Heart left ventricle (tissue), 16 donors: ENCODE measurements at regions of chr6 and their contacts with region 1.

Region 1: GRCh38 chr6:108896111-108896661 is 48.0 kb downstream of the ARMC2 start:
- DNase-seq: no peak
- ATAC-seq: peak in 3 of 4 donors; percentile 29 to 45 (median 31)
- H3K4me3 ChIP-seq: no peak overlapping the region
- H3K27ac ChIP-seq: peak overlapping the region; percentile 40 to 90 (median 66)
- H3K4me1 ChIP-seq: peaks cover 0 to 58% (median 26%) of the 10 kb centered on the region in 12 donors
- H3K27me3 ChIP-seq: no peaks in the 10 kb centered on the region
- CTCF ChIP-seq: no peak
- POLR2A ChIP-seq: no peak

Region 2: DNA sequence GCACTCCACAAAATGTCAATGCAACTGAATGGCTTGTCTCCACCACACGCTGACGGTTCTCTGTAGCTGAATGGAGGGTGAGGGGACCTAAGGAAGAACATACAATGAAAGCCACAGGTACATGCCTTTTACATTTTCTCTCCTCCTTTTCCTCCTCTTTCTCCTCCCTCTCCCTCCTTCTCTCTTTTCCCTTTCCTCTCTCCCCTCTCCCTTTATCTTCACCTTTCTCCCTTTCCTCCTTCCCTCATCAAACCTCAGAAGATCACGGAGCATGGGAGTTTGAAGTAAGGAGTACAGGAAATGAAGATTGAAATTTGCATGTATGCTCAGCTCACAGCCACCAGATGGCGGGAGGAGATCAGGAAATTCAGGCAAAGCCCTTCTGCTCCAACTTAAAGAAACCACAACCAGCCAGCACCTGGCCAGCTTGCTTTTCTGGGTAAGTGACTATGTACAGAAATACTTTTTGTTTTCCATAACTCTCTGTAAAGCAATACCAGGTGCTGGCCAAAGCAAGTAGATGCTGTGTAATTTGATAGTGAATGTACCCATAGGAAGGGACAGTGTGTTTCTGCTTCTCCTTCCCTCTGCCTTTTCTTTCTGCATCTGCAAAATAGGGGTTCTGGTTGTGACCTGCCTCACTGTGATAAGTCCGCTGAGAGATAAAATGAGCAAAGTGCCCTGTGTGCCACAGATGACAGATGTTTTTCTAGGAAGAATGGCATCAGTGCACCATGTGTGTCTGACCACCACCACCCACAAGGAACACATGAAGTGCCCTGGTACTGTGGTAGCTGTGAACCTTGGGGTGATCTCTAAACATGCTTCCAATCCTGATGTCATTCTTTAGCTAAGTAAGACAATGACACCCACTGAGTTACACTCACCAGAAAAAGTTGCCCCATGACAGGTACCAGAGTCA is 354.1 kb before region 1 on chr6:
- intact Hi-C with region 1: loop called (anchors 1 to 5 kb)
- DNase-seq: peak; percentile 61 to 76 (median 70)
- ATAC-seq: peak; percentile 54 to 86 (median 80)
- H3K4me3 ChIP-seq: no peak overlapping the region
- H3K27ac ChIP-seq: no peak overlapping the region
- H3K4me1 ChIP-seq: peaks cover 0 to 14% (median 0%) of the 10 kb centered on the region in 12 donors
- H3K27me3 ChIP-seq: no peaks in the 10 kb centered on the region
- CTCF ChIP-seq: peak; percentile 68 to 92 (median 89)
- POLR2A ChIP-seq: no peak

Region 3: GRCh38 chr6:108782179-108783041 is 113.8 kb before region 1 on chr6:
- intact Hi-C with region 1: loop called in 3 of 10 experiments (anchors 5 kb)
- DNase-seq: peak; percentile 81 to 88 (median 83)
- ATAC-seq: peak; percentile 85 to 96 (median 94)
- H3K4me3 ChIP-seq: peak overlapping the region in 11 of 12 donors; percentile 4 to 66 (median 54)
- H3K27ac ChIP-seq: peak overlapping the region in 4 of 12 donors; percentile 25 to 68 (median 55)
- H3K4me1 ChIP-seq: peaks cover 0 to 15% (median 6%) of the 10 kb centered on the region in 12 donors
- H3K27me3 ChIP-seq: no peaks in the 10 kb centered on the region
- CTCF ChIP-seq: peak; percentile 65 to 88 (median 78)
- POLR2A ChIP-seq: no peak

Region 4: GRCh38 chr6:108848116-108848868 is 47.9 kb before region 1 on chr6 and contains the start of gene ARMC2:
- intact Hi-C with region 1: loop called in 3 of 10 experiments (anchors 5 kb)
- DNase-seq: peak; percentile 94 to 99 (median 96)
- ATAC-seq: peak; percentile 95 to 98 (median 96)
- H3K4me3 ChIP-seq: peak within 1 kb of the TSS; percentile 59 to 92 (median 76)
- H3K27ac ChIP-seq: peak within 1 kb of the TSS; percentile 66 to 94 (median 88)
- H3K4me1 ChIP-seq: peaks cover 0 to 58% (median 29%) of the 10 kb centered on the region in 12 donors
- H3K27me3 ChIP-seq: no peaks in the 10 kb centered on the region
- CTCF ChIP-seq: peak in 2 of 12 donors; percentile 10 to 14
- POLR2A ChIP-seq: peak; percentile 66
- total RNA-seq, gene ARMC2: 5.7 to 18.0 (median 10.2) TPM

Region 5: GRCh38 chr6:109002051-109002697 is 106.0 kb after region 1 on chr6:
- intact Hi-C with region 1: loop called in 2 of 10 experiments (anchors 5 to 10 kb)
- DNase-seq: no peak
- ATAC-seq: peak; percentile 50 to 69 (median 60)
- H3K4me3 ChIP-seq: peak overlapping the region in 3 of 12 donors; percentile 6 to 14 (median 8)
- H3K27ac ChIP-seq: peak overlapping the region; percentile 34 to 89 (median 69)
- H3K4me1 ChIP-seq: peaks cover 5 to 89% (median 53%) of the 10 kb centered on the region in 12 donors
- H3K27me3 ChIP-seq: no peaks in the 10 kb centered on the region
- CTCF ChIP-seq: no peak
- POLR2A ChIP-seq: peak in 1 of 2 donors; percentile 7

Region 6: GRCh38 chr6:109420796-109421583 is 524.8 kb after region 1 on chr6:
- intact Hi-C with region 1: no loop called
- DNase-seq: no peak
- ATAC-seq: no peak
- H3K4me3 ChIP-seq: no peak overlapping the region
- H3K27ac ChIP-seq: no peak overlapping the region
- H3K4me1 ChIP-seq: no peaks in the 10 kb centered on the region
- H3K27me3 ChIP-seq: no peaks in the 10 kb centered on the region
- CTCF ChIP-seq: no peak
- POLR2A ChIP-seq: no peak